PC-3 (cell line): ENCODE measurements at regions of chr3 and their contacts with region 1.

Region 1: GRCh38 chr3:120417272-120417911 is 33.4 kb downstream of the FSTL1 start:
- DNase-seq: peak; percentile 99
- ATAC-seq: peak; percentile 84
- H3K4me3 ChIP-seq: peak overlapping the region; percentile 57
- H3K27ac ChIP-seq: peak overlapping the region; percentile 56
- H3K4me1 ChIP-seq: peaks cover 24% of the 10 kb centered on the region
- H3K27me3 ChIP-seq: no peaks in the 10 kb centered on the region
- CTCF ChIP-seq: peak; percentile 97

Region 2: DNA sequence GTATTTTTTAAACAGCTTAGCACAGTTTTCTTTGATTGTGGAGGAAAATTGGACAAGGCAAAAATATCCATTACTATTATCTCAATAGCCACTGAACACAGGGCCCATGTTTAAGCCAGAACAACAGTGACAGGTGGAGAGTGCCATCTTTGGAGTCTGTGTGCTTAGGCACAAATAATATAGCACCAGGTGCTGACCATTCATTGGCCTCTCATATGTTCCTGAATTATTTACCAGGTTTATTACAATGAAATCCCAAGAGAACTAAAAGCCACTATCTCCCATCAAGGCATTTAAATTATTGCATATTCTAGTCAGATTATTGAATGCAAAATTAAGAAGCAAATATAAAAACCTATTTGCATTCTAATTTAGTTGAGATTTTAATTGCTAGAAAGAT is 172.0 kb before region 1 on chr3:
- CTCF ChIA-PET with region 1: interaction called, 25 read pairs
- POLR2A ChIA-PET with region 1: no interaction called
- intact Hi-C with region 1: loop called (anchors 1 kb)
- DNase-seq: no peak
- ATAC-seq: no peak
- H3K4me3 ChIP-seq: no peak overlapping the region
- H3K27ac ChIP-seq: no peak overlapping the region
- H3K4me1 ChIP-seq: no peaks in the 10 kb centered on the region
- H3K27me3 ChIP-seq: no peaks in the 10 kb centered on the region
- CTCF ChIP-seq: no peak

Region 3: DNA sequence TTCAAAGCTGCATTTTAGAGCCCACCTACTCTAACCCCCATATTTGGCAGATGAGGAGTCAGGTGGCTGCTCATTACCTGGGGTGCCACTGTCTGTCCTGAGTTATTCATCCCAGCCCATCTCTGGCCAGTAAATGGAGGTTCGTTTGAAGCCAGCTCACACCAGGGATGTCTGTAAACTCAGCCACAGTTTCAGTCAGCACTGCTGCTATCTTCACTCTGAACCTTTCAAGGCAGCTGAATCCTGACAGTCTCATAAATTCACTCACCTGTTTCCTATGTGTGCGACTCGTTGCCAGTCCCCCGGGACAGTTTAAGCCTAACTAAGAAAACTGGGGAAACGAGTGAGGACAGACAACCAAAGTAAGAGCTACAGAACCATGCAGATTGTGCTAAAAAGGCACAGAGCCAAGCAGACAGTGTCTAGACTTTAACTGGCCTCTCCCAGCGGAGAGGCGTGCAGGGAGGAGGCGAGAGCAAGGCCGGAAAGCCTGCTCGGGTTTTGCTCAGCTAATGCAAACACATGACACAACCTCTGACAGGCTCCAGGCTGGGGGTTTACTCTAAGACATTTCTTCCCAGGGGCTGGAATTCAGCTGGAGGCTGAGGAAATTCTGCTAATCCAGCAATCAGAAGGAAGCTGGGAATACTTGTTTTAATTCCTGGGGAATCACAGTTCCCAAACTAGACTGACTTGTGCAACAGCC is 21.4 kb after region 1 on chr3:
- CTCF ChIA-PET with region 1: interaction called, 10 read pairs
- POLR2A ChIA-PET with region 1: interaction called, 3 read pairs
- intact Hi-C with region 1: loop called (anchors 2 kb)
- DNase-seq: peak; percentile 89
- ATAC-seq: peak; percentile 77
- H3K4me3 ChIP-seq: peak overlapping the region; percentile 8; the same call in 1 of the 2 replicates
- H3K27ac ChIP-seq: peak overlapping the region; percentile 74
- H3K4me1 ChIP-seq: peaks cover 79% of the 10 kb centered on the region
- H3K27me3 ChIP-seq: no peaks in the 10 kb centered on the region
- CTCF ChIP-seq: no peak

Region 4: GRCh38 chr3:120506828-120507774 is 89.7 kb after region 1 on chr3:
- CTCF ChIA-PET with region 1: interaction called, 4 read pairs
- POLR2A ChIA-PET with region 1: no interaction called
- intact Hi-C with region 1: loop called (anchors 1 kb)
- DNase-seq: peak; percentile 84
- ATAC-seq: peak; percentile 88
- H3K4me3 ChIP-seq: peak overlapping the region; percentile 33; the same call in 1 of the 2 replicates
- H3K27ac ChIP-seq: peak overlapping the region; percentile 72
- H3K4me1 ChIP-seq: peaks cover 22% of the 10 kb centered on the region
- H3K27me3 ChIP-seq: no peaks in the 10 kb centered on the region
- CTCF ChIP-seq: peak; percentile 94

Region 5: GRCh38 chr3:120596116-120596852 is 178.9 kb after region 1 on chr3 and contains the start of gene NDUFB4:
- CTCF ChIA-PET with region 1: interaction called, 9 read pairs
- POLR2A ChIA-PET with region 1: interaction called, 3 read pairs
- intact Hi-C with region 1: loop called (anchors 1 kb)
- DNase-seq: peak; percentile 100
- ATAC-seq: peak; percentile 98
- H3K4me3 ChIP-seq: peak within 1 kb of the TSS; percentile 93
- H3K27ac ChIP-seq: peak within 1 kb of the TSS; percentile 68
- H3K4me1 ChIP-seq: peaks cover 19% of the 10 kb centered on the region
- H3K27me3 ChIP-seq: no peaks in the 10 kb centered on the region
- CTCF ChIP-seq: no peak
- total RNA-seq, gene NDUFB4: 239 and 283 TPM in 2 replicates

Region 6: GRCh38 chr3:120730576-120731542 is 313.5 kb after region 1 on chr3:
- CTCF ChIA-PET with region 1: no interaction called
- POLR2A ChIA-PET with region 1: no interaction called
- intact Hi-C with region 1: no loop called
- DNase-seq: no peak
- ATAC-seq: no peak
- H3K4me3 ChIP-seq: no peak overlapping the region
- H3K27ac ChIP-seq: no peak overlapping the region
- H3K4me1 ChIP-seq: no peaks in the 10 kb centered on the region
- H3K27me3 ChIP-seq: no peaks in the 10 kb centered on the region
- CTCF ChIP-seq: no peak

Region 7: DNA sequence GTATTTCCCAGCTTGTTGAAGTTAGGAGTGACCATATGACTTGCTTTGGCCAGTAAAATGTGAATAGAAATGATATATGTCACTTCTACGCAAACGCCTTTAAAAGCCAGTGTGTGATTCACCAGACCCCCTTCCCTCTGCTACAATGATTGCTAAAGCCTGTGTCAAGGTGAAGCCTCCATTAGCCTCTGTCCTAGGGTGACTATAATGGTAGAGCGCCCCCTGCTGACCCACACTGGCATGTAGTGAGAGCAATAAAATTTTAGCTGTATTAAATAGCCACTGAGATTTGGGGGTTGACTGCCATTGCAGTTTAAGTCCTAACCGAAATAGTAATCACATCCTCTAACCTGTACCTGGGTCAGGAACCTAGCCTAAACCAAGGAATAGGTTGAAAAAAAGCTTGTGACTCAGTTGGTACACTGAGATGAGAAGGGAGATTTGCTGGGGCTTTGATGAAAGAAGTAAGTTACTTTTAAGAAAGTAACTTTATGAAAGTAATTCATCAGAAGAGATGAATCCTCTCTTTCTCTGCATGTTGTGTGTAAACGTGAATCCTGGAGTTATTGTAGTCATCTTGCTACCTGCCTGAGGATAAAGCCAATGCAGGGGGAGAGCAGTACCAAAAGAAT is 377.7 kb after region 1 on chr3:
- CTCF ChIA-PET with region 1: interaction called, 3 read pairs
- POLR2A ChIA-PET with region 1: no interaction called
- intact Hi-C with region 1: loop called (anchors 5 kb)
- DNase-seq: peak; percentile 93
- ATAC-seq: peak; percentile 65
- H3K4me3 ChIP-seq: no peak overlapping the region
- H3K27ac ChIP-seq: 0 out of 2 replicates have a peak overlapping the region, but pooled peaks have one; percentile 3
- H3K4me1 ChIP-seq: peaks cover 28% of the 10 kb centered on the region
- H3K27me3 ChIP-seq: no peaks in the 10 kb centered on the region
- CTCF ChIP-seq: peak; percentile 99